ENCODE measurements at regions of chr20 and their contacts with region 1.

Region 1: DNA sequence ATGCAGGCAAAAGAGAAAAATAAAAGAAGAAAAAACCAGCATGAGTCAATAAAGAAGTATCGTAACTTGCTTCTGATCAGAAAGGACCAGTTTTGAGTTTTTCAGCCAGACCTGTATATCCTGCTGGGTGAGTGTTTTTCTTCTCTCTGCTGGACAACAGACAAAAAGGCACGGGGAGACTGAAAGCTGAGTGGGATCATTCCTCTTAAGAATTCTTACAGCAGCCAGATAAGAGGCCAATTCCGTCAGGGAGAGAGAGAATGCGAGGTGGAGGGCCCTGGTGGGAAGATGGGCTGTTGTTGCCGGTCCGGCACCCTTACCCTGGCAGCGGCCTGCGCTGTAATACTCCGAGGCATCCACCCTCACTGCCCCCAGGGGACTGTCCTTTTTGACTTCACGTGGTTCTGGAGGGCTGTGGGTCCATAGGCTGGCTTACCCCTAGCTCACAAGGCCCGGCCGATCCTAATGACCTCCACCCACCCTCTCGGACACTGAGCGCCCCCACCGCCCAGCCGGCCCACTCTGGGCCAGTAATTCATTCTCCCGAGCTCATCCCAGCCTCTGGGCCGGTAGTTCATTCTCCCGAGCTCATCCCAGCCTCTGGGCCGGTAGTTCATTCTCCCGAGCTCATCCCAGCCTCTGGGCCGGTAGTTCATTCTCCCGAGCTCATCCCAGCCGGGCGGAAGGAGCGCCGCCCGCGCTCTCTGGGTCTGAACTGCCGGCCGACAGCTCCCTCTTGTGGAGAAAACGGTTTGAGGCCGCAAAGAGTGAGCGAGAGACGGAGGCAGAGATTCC is 118.3 kb upstream of the SIRPA start:
- DNase-seq: peak; percentile 84
- ATAC-seq: peak; percentile 93
- H3K4me3 Mint-ChIP-seq: peak overlapping the region; percentile 64
- H3K27ac Mint-ChIP-seq: no peak overlapping the region
- H3K4me1 Mint-ChIP-seq: peaks cover 10% of the 10 kb centered on the region
- H3K27me3 Mint-ChIP-seq: peaks cover 14% of the 10 kb centered on the region

Region 2: GRCh38 chr20:1466211-1467081 is 310.4 kb before region 1 on chr20 and contains the start of gene NSFL1C:
- CTCF ChIA-PET with region 1: interaction called, 21 read pairs
- DNase-seq: peak; percentile 97
- ATAC-seq: peak; percentile 98
- H3K4me3 Mint-ChIP-seq: peak within 1 kb of the TSS; percentile 79
- H3K27ac Mint-ChIP-seq: peak within 1 kb of the TSS; percentile 78
- H3K4me1 Mint-ChIP-seq: peaks cover 39% of the 10 kb centered on the region
- H3K27me3 Mint-ChIP-seq: peaks cover 16% of the 10 kb centered on the region
- total RNA-seq, gene NSFL1C: 55.6 to 65.0 TPM

Region 3: DNA sequence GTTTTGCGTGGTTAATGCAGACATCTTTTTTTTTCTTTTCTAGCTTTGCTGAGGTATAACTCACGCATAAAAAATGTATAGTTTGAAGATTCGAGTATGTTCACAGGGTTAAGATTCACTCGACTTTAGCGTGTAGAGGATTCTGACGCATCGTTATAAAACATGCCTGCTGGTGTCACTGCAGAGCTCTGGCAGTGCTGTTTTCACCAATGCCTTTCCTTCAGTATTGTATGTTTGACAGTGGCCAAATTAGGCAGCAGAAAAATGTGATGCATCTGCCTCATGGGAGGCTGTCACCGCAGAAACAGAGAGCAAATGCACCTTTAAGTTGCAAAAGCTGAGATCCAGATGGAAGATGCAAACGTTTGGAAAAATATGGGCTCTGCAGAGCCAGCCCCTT is 267.6 kb before region 1 on chr20:
- CTCF ChIA-PET with region 1: interaction called, 41 read pairs
- DNase-seq: no peak
- ATAC-seq: no peak
- H3K4me3 Mint-ChIP-seq: no peak overlapping the region
- H3K27ac Mint-ChIP-seq: no peak overlapping the region
- H3K4me1 Mint-ChIP-seq: no peaks in the 10 kb centered on the region
- H3K27me3 Mint-ChIP-seq: peaks cover 50% of the 10 kb centered on the region

Region 4: DNA sequence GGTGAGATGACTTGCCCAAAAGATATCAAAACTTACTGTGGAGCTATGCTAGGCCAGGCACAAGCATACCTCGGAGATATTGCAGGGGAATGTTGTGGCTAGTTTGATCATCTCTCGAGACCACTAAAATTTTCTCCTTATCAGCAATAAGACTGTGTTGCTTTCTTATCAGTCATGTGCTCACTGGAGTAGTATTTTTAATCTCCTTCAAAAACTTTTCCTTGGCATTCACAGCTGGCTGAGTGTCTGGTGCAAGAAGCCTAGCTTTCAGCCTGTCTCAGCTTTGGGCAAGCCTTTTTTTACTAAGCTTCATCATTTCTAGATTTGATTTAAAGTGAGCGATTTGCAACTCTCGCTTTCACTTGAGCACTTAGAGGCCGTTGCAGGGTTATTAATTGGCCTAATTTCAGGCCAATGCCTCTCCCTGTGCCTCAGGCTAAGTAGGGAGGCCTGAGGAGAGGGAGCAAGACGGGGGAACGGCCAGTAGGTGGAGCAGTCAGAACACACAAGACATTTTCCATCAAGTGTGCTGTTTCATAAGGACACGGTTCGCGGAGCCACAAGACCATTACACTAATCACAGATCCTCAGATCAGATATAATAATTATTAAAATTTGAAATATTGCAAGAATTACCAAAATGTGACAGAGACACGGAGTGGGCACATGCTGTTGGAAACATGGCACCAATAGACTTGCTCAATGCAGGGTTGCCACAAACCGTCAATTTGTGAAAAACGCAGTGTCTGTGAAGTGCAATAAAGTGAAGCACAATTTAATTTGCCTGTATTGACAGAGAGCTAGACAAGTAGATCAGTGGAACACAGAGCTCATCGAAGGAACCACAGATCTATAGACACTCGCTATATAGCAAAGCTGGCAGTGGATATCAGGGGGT is 12.5 kb before region 1 on chr20:
- CTCF ChIA-PET with region 1: interaction called, 53 read pairs
- DNase-seq: peak; percentile 71
- ATAC-seq: peak; percentile 69
- H3K4me3 Mint-ChIP-seq: no peak overlapping the region
- H3K27ac Mint-ChIP-seq: no peak overlapping the region
- H3K4me1 Mint-ChIP-seq: peaks cover 1% of the 10 kb centered on the region
- H3K27me3 Mint-ChIP-seq: peaks cover 13% of the 10 kb centered on the region

Region 5: GRCh38 chr20:1802385-1803060 is 25.6 kb after region 1 on chr20:
- CTCF ChIA-PET with region 1: interaction called, 10 read pairs
- DNase-seq: peak; percentile 56
- ATAC-seq: peak; percentile 57
- H3K4me3 Mint-ChIP-seq: peak overlapping the region; percentile 25
- H3K27ac Mint-ChIP-seq: no peak overlapping the region
- H3K4me1 Mint-ChIP-seq: peaks cover 9% of the 10 kb centered on the region
- H3K27me3 Mint-ChIP-seq: peaks cover 70% of the 10 kb centered on the region

Region 6: DNA sequence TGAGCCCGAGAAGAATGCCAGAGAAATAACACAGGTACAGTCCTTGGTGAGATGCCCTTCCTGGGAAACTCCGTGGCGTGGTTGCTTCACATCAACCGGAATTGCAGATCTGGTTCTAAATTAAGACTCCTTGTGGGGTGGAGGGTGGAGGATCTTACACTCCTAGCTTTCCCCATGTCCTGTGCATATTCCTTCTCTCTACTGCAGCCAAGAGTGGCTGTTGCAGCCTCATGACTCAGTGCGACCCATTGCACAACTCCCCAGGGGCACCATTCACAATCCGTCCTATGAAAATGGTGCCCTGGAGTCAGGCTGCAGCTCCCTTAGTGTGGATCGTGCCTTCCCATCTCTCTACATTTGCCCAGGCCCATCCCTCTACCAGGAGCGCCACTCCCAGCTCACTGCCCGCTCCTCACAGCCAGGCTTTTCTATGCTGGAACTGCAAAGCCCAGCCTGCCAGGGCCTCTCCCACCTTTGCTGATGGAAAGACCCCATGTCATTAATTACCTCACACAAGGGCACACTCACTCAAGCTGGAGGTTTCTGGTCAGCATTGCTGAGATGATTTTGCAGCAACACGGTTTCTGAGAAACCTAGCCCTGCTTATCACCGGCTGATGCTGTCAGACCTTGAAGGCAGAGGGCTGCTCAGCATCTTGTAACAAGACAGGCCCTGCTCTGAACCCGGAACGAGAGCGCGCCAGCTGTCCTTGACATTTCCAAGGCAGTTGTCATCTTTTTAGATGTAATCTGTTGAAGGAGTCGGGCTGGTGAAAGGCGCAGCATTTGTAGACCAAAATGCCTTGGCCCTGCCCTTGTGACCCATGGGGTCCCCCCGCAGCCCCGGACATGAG is 158.1 kb after region 1 on chr20:
- CTCF ChIA-PET with region 1: no interaction called
- DNase-seq: no peak
- ATAC-seq: no peak
- H3K4me3 Mint-ChIP-seq: no peak overlapping the region
- H3K27ac Mint-ChIP-seq: no peak overlapping the region
- H3K4me1 Mint-ChIP-seq: no peaks in the 10 kb centered on the region
- H3K27me3 Mint-ChIP-seq: peaks cover 12% of the 10 kb centered on the region